GM18951 (cell line): ENCODE measurements at regions of chr1 and their contacts with region 1.

Region 1: DNA sequence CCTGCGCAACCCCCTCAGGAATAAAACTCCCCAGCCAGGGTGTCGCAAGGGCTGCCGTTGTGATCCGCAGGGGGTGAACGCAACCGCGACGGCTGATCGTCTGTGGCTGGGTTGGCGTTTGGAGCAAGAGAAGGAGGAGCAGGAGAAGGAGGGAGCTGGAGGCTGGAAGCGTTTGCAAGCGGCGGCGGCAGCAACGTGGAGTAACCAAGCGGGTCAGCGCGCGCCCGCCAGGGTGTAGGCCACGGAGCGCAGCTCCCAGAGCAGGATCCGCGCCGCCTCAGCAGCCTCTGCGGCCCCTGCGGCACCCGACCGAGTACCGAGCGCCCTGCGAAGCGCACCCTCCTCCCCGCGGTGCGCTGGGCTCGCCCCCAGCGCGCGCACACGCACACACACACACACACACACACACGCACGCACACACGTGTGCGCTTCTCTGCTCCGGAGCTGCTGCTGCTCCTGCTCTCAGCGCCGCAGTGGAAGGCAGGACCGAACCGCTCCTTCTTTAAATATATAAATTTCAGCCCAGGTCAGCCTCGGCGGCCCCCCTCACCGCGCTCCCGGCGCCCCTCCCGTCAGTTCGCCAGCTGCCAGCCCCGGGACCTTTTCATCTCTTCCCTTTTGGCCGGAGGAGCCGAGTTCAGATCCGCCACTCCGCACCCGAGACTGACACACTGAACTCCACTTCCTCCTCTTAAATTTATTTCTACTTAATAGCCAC is 696 bp downstream of the TGFB2 start:
- POLR2A ChIP-seq: no peak

Region 2: DNA sequence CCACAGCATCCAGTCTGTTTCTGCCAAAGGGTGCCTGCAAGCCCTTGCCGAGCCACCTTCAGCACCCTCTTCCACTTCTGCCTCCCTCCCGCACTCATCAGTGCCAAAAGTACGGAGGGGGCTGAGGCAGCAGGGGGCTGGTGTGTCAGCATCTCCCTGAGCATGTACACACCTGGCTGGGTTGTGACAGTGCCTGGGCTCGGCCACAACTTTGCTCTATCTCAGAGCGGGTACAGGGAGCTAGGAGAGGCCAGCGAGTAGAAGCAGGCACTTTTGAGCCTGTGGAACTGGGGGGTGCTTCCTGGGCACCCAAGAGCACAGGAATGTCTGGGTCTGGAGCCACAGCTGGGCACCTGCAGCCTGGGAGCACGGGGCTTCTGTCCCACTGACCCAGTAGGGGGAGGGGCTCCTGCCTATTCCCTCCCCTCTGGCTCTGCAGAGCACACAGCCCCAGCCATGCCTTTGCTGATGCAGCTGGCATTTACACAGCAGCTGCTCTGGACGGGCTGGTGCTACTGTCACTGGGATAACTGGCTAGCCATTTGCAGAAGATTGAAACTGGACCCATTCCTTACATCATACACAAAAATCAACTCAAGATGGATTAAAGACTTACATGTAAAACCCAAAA is 380.6 kb before region 1 on chr1:
- in situ Hi-C with region 1: no loop called
- POLR2A ChIP-seq: no peak

Region 3: GRCh38 chr1:218025454-218025853 is 320.4 kb before region 1 on chr1:
- in situ Hi-C with region 1: no loop called
- POLR2A ChIP-seq: no peak

Region 4: GRCh38 chr1:218312509-218312908 is 33.3 kb before region 1 on chr1:
- in situ Hi-C with region 1: no loop called
- POLR2A ChIP-seq: no peak

Region 5: GRCh38 chr1:218742467-218743260 is 396.8 kb after region 1 on chr1:
- in situ Hi-C with region 1: no loop called
- POLR2A ChIP-seq: no peak

Region 6: DNA sequence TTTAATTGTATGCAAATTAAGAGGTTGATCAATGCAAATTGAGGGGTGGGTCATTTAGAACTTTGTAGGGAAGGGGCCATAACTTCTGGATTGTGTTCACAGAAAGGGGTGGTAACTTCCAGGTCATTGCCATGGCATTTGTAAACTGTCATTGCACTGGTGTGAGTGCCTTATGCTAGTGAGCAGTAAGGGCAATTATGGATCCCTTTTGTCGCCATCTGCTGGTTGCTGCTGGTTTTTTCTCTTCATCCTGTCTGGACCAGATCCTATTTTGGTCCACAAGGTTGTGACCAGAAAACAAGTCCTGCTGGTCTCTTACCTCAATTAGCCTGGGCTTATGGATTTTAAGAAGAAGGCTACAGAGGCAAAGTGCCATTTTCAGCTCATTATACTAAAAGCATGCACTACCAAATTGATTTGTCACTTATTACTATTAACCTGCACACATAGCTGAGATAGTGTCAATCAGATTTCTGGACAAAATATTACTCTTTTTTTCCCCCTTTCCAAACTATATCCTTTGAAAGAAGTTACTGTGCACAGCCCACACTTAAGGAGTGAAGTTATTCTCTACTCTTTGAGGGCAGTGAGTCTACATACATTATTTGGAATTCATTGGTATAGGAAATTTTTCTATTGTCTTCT is 1070.9 kb after region 1 on chr1:
- in situ Hi-C with region 1: loop called (anchors 25 kb)
- POLR2A ChIP-seq: no peak

Region 7: DNA sequence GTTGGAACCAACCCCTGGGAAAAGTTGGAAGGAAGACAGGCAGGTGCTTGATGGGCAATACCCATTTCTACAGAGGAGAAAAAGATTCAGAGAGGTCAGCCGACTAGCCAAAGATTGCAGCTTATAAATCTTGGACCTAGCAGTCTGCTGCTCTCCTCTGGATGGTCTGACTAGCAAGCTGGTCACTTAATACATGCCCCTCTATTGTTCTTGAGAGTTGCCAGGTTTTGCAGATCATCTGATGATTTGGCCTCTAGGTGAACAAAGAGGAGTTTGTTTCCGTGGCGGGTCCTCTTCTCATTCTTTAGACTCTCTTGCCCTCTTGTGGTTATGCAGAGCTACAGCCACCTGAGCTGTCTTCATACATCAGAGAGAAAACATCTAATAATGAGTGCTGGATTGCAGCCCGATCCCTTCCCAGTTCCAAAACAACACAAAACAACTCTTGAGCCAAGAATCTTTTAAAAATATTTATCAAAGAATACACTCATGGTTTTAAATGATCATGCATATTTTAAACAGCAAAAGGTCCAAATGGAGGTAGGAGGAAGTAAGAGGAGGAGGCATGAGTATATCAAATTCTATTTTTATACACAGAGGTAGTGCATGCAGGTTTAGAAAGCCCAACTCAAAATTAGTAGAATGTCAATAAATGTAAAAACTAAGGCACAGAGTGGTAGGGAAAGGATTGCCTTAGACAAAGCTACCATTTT is 1466.8 kb after region 1 on chr1:
- in situ Hi-C with region 1: loop called (anchors 25 kb)
- POLR2A ChIP-seq: no peak